ENCODE measurements at regions of chr20 and their contacts with region 1.

Region 1: GRCh38 chr20:39800548-39800947 is 838.4 kb downstream of the DHX35 start:
- DNase-seq: peak; percentile 63
- ATAC-seq: peak; percentile 44; the same call in 1 of the 2 replicates
- H3K4me3 ChIP-seq: no peak overlapping the region
- H3K27ac ChIP-seq: no peak overlapping the region
- H3K4me1 ChIP-seq: no peaks in the 10 kb centered on the region
- H3K27me3 ChIP-seq: no peaks in the 10 kb centered on the region
- CTCF ChIP-seq: no peak
- POLR2A ChIP-seq: no peak
- RAD21 ChIP-seq: no peak

Region 2: GRCh38 chr20:39268981-39269461 is 531.5 kb before region 1 on chr20:
- CTCF ChIA-PET with region 1: no interaction called
- POLR2A ChIA-PET with region 1: no interaction called
- dilution Hi-C with region 1: no loop called
- in situ Hi-C with region 1: no loop called
- intact Hi-C with region 1: no loop called
- DNase-seq: peak; percentile 3
- ATAC-seq: peak; percentile 89
- H3K4me3 ChIP-seq: no peak overlapping the region
- H3K27ac ChIP-seq: no peak overlapping the region
- H3K4me1 ChIP-seq: no peaks in the 10 kb centered on the region
- H3K27me3 ChIP-seq: no peaks in the 10 kb centered on the region
- CTCF ChIP-seq: peak; percentile 64
- POLR2A ChIP-seq: no peak
- RAD21 ChIP-seq: peak; percentile 71

Region 3: GRCh38 chr20:39706184-39706663 is 94.3 kb before region 1 on chr20:
- CTCF ChIA-PET with region 1: no interaction called
- POLR2A ChIA-PET with region 1: no interaction called
- dilution Hi-C with region 1: no loop called
- in situ Hi-C with region 1: loop called (anchors 25 kb)
- intact Hi-C with region 1: no loop called
- DNase-seq: no peak
- ATAC-seq: no peak
- H3K4me3 ChIP-seq: no peak overlapping the region
- H3K27ac ChIP-seq: no peak overlapping the region
- H3K4me1 ChIP-seq: no peaks in the 10 kb centered on the region
- H3K27me3 ChIP-seq: no peaks in the 10 kb centered on the region
- CTCF ChIP-seq: no peak
- POLR2A ChIP-seq: no peak
- RAD21 ChIP-seq: no peak